H1 (cell line): ENCODE measurements at regions of chr3 and their contacts with region 1.

Region 1: DNA sequence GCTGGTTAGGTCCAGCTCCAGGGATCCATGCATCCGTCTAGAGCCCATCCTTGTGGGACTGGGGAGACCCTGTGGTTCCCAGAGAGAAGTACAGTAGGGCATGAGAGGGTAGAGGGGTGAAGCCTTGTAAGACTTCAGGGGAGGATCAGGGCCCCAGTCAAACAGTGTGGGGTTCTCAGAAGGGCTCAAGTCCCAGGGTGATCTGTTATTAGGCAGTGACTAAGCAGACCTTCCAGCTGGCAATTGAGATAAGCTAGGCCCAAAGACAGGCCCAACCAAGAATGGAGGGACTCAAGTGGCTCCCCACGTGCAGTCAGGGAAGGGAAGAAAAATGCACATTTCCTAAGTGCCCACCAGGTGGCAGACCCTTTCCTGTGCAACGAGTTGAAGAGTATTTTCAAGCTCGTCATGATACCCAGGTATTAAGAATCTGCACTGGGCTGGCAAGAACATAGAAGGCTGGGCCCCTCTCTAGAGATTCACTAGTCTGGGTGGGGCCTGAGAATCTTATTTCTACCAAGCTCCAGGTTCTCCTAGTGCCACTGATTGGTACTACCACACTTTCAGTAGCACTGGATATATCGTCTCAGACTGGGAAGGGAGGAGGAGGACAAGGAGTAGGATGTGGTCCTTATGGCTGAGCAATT is 240.8 kb downstream of the NR1D2 start:
- DNase-seq: peak; percentile 9 to 65
- H3K4me3 ChIP-seq: no peak overlapping the region
- H3K27ac ChIP-seq: no peak overlapping the region
- H3K4me1 ChIP-seq: no peaks in the 10 kb centered on the region
- H3K27me3 ChIP-seq: no peaks in the 10 kb centered on the region
- CTCF ChIP-seq: peak; percentile 63 to 79 (median 64)
- EP300 ChIP-seq: no peak
- POLR2A ChIP-seq: no peak
- RAD21 ChIP-seq: peak; percentile 65 to 74

Region 2: DNA sequence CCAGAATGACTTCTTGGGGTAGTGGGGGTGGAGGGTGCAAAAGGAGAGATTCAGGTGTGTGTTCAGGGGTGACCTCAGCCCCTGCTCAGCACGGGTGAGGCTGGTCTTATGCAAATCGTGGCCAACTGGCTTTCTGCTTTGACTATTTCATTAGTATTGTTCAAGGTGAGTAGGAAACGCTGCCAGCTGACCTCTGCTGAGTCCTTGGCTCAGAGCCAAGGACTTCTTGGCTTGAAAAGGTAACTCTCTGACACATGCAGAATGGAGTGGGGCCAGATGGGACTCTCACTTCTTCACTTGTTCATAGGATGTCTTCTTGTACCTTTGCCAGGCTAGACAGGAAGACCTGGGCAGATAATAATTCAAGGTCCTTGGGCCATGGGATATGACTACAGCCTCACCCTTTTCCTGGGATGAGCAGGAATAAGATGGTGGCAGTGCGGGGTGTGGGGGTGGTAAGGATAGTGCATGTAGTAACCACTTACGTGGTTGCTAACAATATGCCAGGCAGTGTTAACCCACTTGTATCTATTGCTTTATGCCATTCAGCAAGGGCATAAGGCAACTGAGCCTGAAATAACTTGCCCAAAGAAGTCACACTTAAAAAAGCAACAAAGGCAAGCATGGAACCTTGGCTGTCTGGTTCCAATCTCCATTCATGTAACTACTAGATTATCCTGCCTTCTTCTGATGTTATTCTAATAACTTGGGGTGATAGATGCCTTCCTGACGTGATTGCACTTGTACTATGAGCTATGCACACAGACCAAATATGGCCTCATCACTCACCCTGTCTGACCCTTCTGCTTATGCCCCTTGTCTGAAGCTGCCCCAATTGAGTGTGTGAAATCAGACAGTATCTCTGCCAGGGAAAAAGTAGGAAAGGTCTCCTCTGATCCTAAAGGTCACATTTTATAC is 47.6 kb before region 1 on chr3:
- CTCF ChIA-PET with region 1: no interaction called
- POLR2A ChIA-PET with region 1: no interaction called
- DNase-seq: no peak
- H3K4me3 ChIP-seq: no peak overlapping the region
- H3K27ac ChIP-seq: no peak overlapping the region
- H3K4me1 ChIP-seq: no peaks in the 10 kb centered on the region
- H3K27me3 ChIP-seq: no peaks in the 10 kb centered on the region
- CTCF ChIP-seq: no peak
- EP300 ChIP-seq: no peak
- POLR2A ChIP-seq: no peak
- RAD21 ChIP-seq: no peak

Region 3: GRCh38 chr3:24174614-24175013 is 11.2 kb before region 1 on chr3:
- CTCF ChIA-PET with region 1: interaction called, 38 read pairs
- POLR2A ChIA-PET with region 1: interaction called, 3 read pairs
- DNase-seq: no peak
- H3K4me3 ChIP-seq: no peak overlapping the region
- H3K27ac ChIP-seq: no peak overlapping the region
- H3K4me1 ChIP-seq: peaks cover 0 to 8% (median 5%) of the 10 kb centered on the region in 4 experiments; a peak in 2 of 7 replicates
- H3K27me3 ChIP-seq: no peaks in the 10 kb centered on the region
- CTCF ChIP-seq: no peak
- EP300 ChIP-seq: no peak
- POLR2A ChIP-seq: no peak
- RAD21 ChIP-seq: no peak

Region 4: GRCh38 chr3:24220859-24221657 is 35.2 kb after region 1 on chr3:
- CTCF ChIA-PET with region 1: interaction called, 25 read pairs
- POLR2A ChIA-PET with region 1: no interaction called
- DNase-seq: peak in 1 of 2 experiments; percentile 19
- H3K4me3 ChIP-seq: no peak overlapping the region
- H3K27ac ChIP-seq: no peak overlapping the region
- H3K4me1 ChIP-seq: peaks cover 0 to 8% (median 4%) of the 10 kb centered on the region in 4 experiments; a peak in 3 of 7 replicates
- H3K27me3 ChIP-seq: peaks cover 0 to 1% (median 0%) of the 10 kb centered on the region in 4 experiments; a peak in 1 of 7 replicates
- CTCF ChIP-seq: no peak
- EP300 ChIP-seq: no peak
- POLR2A ChIP-seq: no peak
- RAD21 ChIP-seq: no peak

Region 5: DNA sequence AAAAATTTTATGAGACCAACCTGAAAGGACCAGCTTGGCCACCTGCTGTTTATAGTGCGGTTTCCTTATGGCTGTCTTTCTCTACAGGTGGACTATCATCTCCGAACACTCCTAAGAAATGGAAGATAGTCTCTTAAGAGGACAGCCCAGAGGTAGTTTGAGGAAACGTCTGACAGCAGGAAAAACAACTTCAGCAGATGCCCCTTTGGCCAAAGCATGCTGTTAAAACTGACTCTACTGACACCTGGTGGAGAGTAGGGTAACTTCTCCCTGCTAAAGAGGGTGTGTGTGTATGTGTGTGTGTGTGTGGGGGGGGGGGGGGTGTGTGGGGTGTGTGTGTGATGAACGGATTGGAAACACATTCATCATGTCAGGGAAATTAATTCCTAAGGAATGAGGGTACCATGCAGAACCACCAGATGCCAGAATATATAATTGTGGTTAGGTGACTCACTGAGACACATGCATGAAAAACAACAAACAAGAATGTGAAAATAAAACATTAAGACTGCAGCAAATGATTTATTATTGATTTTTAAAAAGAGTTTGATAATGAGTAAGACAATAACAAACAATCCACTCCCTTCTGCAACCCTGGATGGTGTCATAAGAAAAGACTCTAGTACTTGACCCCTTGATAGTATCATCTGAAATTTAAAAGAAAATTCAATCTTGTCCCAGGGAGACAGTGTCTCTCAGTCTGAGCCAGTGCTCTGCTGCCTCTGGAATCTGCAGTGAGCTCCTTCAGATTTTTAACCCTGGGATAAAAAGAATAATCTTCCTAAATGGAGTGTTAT is 52.3 kb after region 1 on chr3:
- CTCF ChIA-PET with region 1: interaction called, 58 read pairs
- POLR2A ChIA-PET with region 1: no interaction called
- DNase-seq: peak; percentile 10 to 51
- H3K4me3 ChIP-seq: no peak overlapping the region
- H3K27ac ChIP-seq: no peak overlapping the region
- H3K4me1 ChIP-seq: peaks cover 0 to 13% (median 2%) of the 10 kb centered on the region in 4 experiments; a peak in 3 of 7 replicates
- H3K27me3 ChIP-seq: no peaks in the 10 kb centered on the region
- CTCF ChIP-seq: peak; percentile 9 to 88 (median 76)
- EP300 ChIP-seq: no peak
- POLR2A ChIP-seq: no peak
- RAD21 ChIP-seq: peak; percentile 87 to 89

Region 6: DNA sequence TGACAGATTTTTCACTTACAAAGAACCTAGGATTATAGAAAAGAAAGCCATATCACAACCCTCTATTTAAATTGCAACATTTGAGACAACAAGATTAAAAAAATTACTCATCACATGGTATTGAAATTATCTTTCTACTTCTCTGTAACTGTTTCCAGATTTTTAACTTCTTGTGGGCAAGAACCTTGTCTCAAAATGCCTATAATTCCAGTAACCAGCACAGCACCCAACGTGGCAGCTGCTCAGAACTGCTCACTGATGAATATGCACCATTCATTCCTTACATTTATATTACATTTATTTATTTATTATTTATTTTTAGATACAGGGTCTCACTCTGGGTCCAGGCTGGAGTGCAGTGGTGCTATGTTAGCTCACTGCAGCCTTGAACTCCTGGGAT is 92.7 kb after region 1 on chr3:
- CTCF ChIA-PET with region 1: no interaction called
- POLR2A ChIA-PET with region 1: no interaction called
- DNase-seq: no peak
- H3K4me3 ChIP-seq: no peak overlapping the region
- H3K27ac ChIP-seq: no peak overlapping the region
- H3K4me1 ChIP-seq: no peaks in the 10 kb centered on the region
- H3K27me3 ChIP-seq: no peaks in the 10 kb centered on the region
- CTCF ChIP-seq: no peak
- EP300 ChIP-seq: no peak
- POLR2A ChIP-seq: no peak
- RAD21 ChIP-seq: no peak

Region 7: GRCh38 chr3:24351779-24352469 is 166.1 kb after region 1 on chr3:
- CTCF ChIA-PET with region 1: no interaction called
- POLR2A ChIA-PET with region 1: no interaction called
- DNase-seq: no peak
- H3K4me3 ChIP-seq: no peak overlapping the region
- H3K27ac ChIP-seq: no peak overlapping the region
- H3K4me1 ChIP-seq: no peaks in the 10 kb centered on the region
- H3K27me3 ChIP-seq: no peaks in the 10 kb centered on the region
- CTCF ChIP-seq: no peak
- EP300 ChIP-seq: no peak
- POLR2A ChIP-seq: no peak
- RAD21 ChIP-seq: no peak